HCT116 (cell line): ENCODE measurements at regions of chr5 and their contacts with region 1.

Region 1: DNA sequence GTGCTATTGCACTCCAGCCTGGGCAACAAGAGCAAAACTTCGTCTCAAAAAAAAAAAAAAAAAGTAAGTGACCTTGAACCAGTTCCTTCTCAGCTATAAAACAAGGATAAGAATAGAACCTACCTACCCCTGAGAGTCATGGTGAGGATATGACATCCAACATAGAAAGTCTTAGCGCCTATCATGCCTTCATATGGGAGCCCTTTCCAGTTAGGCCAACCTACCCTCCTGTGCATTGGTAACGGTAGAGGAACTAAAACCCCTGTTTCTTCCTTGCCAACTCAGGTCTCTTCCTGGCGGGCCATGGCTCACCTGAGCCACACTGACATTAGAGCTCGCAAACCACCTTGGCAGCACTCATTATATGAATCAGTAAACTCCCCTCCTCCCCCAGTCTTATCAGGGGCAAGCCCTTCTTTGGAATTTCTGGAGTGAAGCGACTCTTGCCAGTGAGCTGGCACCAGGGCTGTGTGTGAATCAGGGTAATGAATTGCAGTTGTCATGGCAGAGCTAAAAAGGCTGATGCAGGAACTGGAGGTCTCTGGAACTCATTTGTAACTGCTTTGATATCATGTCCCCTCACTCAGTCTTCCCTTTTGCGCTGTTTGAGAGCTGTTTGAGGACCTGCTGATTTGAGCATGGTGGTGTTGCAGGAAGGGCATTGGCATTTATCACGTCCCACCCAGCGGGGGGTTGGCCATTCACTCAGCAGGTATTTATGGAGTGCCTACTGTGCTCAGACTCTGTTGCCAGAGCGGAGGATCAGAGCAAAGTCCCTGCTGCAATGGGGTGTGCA is 10.3 kb downstream of the WWC1 start:
- DNase-seq: peak; percentile 89
- ATAC-seq: peak; percentile 88
- H3K4me3 ChIP-seq: peak overlapping the region in 1 of 2 experiments; percentile 40; a peak in 2 of 4 replicates
- H3K27ac ChIP-seq: peak overlapping the region; percentile 58
- H3K4me1 ChIP-seq: peaks cover 44 to 73% of the 10 kb centered on the region in 2 experiments
- H3K27me3 ChIP-seq: no peaks in the 10 kb centered on the region
- CTCF ChIP-seq: no peak
- POLR2A ChIP-seq: no peak
- RAD21 ChIP-seq: no peak

Region 2: DNA sequence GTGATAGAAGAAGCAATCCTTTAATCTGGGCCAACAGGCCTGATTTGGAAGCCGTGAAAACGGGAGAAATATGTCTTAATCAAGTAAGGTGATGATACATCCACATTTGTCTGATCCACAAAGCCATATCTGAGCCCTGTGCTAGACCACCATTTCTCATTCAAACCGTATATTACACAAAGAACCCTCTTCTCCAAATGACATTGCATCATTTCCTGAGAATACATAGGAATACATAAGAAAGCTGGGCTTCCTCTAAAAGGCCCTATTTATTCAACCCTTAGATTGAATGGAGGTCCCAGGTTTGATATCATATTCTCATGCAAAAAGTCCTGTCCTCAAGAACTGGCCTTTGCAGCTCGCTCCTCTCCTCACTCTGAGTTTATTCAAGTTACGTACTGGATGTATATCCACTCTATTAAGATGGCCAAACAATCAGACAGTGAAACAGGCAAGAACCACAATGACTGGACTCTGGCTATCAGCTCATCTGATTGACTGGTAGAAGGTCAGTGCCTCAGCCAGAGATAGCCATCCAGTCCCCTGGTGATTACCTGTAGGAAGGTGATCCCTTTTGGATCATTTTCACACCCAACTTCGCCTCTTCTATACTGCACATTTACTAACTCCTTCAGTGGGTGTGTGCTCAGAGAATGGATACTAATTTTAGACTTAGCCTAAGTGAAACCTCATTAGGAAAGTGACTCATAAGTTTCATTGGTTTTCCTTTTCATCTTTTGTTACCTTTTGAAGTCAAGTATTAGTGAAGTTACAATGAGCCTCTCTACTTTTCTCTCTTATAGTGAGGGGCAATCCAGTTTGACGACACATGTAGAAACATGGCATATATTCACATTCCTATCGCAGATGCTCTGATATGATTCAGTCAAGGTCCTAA is 177.9 kb before region 1 on chr5:
- CTCF ChIA-PET with region 1: no interaction called
- POLR2A ChIA-PET with region 1: no interaction called
- RAD21 ChIA-PET with region 1: no interaction called
- intact Hi-C with region 1: no loop called
- DNase-seq: no peak
- ATAC-seq: no peak
- H3K4me3 ChIP-seq: no peak overlapping the region
- H3K27ac ChIP-seq: no peak overlapping the region
- H3K4me1 ChIP-seq: no peaks in the 10 kb centered on the region
- H3K27me3 ChIP-seq: peaks cover 44% of the 10 kb centered on the region
- CTCF ChIP-seq: no peak
- POLR2A ChIP-seq: no peak
- RAD21 ChIP-seq: no peak

Region 3: GRCh38 chr5:168260353-168261226 is 41.2 kb before region 1 on chr5:
- CTCF ChIA-PET with region 1: no interaction called
- POLR2A ChIA-PET with region 1: no interaction called
- RAD21 ChIA-PET with region 1: no interaction called
- intact Hi-C with region 1: no loop called
- DNase-seq: no peak
- ATAC-seq: no peak
- H3K4me3 ChIP-seq: no peak overlapping the region
- H3K27ac ChIP-seq: no peak overlapping the region
- H3K4me1 ChIP-seq: no peaks in the 10 kb centered on the region
- H3K27me3 ChIP-seq: no peaks in the 10 kb centered on the region
- CTCF ChIP-seq: no peak
- POLR2A ChIP-seq: no peak
- RAD21 ChIP-seq: no peak

Region 4: DNA sequence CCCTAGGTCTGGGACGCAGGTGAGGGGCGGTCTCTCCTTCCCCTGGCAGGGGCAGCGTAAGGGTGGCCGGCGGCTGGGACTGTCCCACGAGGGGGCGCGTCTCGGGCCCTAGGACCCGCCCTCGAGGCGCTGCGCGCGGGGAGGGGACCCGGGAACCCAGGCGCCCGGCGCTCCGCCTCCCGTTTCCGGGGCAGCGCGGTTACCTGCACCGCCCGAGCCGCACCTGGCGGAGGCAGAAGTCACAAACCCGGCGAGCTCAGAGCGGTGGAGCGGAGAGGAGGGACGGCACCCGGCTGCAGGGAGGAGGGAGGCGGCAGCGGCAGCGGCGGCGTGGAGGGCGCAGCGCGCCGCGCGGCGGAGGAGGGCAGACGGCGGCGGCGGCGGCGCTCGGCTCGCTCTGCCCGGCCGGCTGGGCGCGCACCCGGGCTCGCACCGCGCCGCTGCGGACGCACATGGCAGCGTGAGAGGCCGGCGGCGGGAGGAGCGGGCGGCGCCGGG is 10.3 kb before region 1 on chr5 and contains the start of gene WWC1:
- CTCF ChIA-PET with region 1: interaction called, 6 read pairs
- POLR2A ChIA-PET with region 1: interaction called, 16 read pairs
- RAD21 ChIA-PET with region 1: interaction called in 1 of 2 experiments, 4 read pairs
- intact Hi-C with region 1: no loop called
- DNase-seq: peak; percentile 79
- ATAC-seq: peak; percentile 88
- H3K4me3 ChIP-seq: peak within 1 kb of the TSS; percentile 47 to 70
- H3K27ac ChIP-seq: peak within 1 kb of the TSS; percentile 80
- H3K4me1 ChIP-seq: peaks cover 51 to 77% of the 10 kb centered on the region in 2 experiments
- H3K27me3 ChIP-seq: no peaks in the 10 kb centered on the region
- CTCF ChIP-seq: peak in 2 of 3 experiments; percentile 13 to 26; a peak in 2 of 6 replicates
- POLR2A ChIP-seq: peak; percentile 52
- RAD21 ChIP-seq: no peak
- total RNA-seq, gene WWC1: 52.6 TPM

Region 5: DNA sequence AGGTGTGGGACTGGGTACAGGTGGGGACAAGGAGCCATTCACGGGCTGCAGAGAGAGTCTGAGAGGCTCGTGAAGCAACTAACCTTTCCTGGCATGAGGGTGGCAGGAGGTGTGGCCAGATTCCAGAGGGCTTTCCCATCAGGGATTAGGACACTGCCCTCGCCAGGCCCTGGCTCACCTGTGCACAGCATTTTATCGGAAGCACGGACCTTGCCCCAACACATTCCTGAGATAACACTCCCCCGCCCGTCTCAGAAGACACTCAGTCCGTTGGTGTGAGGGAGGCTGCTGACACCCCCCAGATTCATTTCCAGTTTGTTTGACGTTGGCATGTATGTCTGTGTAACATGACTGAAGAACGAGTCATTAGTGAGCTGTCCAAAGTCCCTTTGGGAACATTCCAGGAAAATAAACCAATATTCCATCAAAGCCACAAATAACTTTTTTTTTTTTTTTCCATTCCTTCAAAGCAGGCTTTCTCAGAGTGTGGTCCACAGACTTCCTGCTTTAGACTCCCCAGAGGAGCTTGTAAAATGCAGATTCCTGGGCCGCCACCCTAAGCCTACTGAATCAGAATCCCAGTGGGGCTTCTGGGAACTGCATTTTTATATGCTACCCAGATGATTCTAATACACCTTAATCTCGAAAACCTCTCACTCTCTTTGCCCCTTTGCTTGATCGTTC is 13.1 kb after region 1 on chr5:
- CTCF ChIA-PET with region 1: interaction called, 3 read pairs
- POLR2A ChIA-PET with region 1: interaction called, 6 read pairs
- RAD21 ChIA-PET with region 1: no interaction called
- intact Hi-C with region 1: loop called (anchors 1 kb)
- DNase-seq: peak; percentile 86
- ATAC-seq: peak; percentile 83
- H3K4me3 ChIP-seq: peak overlapping the region in 1 of 2 experiments; percentile 37; a peak in 3 of 4 replicates
- H3K27ac ChIP-seq: peak overlapping the region; percentile 63
- H3K4me1 ChIP-seq: peaks cover 69 to 80% of the 10 kb centered on the region in 2 experiments
- H3K27me3 ChIP-seq: no peaks in the 10 kb centered on the region
- CTCF ChIP-seq: peak in 1 of 3 experiments; percentile 1; a peak in 2 of 6 replicates
- POLR2A ChIP-seq: no peak
- RAD21 ChIP-seq: no peak

Region 6: GRCh38 chr5:168579488-168580226 is 277.9 kb after region 1 on chr5:
- CTCF ChIA-PET with region 1: no interaction called
- POLR2A ChIA-PET with region 1: no interaction called
- RAD21 ChIA-PET with region 1: no interaction called
- intact Hi-C with region 1: loop called (anchors 10 kb)
- DNase-seq: peak; percentile 97
- ATAC-seq: peak; percentile 97
- H3K4me3 ChIP-seq: peak overlapping the region; percentile 79 to 83
- H3K27ac ChIP-seq: peak overlapping the region; percentile 83
- H3K4me1 ChIP-seq: peaks cover 10 to 28% of the 10 kb centered on the region in 2 experiments; a peak in 3 of 4 replicates
- H3K27me3 ChIP-seq: no peaks in the 10 kb centered on the region
- CTCF ChIP-seq: no peak
- POLR2A ChIP-seq: peak; percentile 94
- RAD21 ChIP-seq: no peak